ENCODE measurements at regions of chr17 and their contacts with region 1.

Region 1: DNA sequence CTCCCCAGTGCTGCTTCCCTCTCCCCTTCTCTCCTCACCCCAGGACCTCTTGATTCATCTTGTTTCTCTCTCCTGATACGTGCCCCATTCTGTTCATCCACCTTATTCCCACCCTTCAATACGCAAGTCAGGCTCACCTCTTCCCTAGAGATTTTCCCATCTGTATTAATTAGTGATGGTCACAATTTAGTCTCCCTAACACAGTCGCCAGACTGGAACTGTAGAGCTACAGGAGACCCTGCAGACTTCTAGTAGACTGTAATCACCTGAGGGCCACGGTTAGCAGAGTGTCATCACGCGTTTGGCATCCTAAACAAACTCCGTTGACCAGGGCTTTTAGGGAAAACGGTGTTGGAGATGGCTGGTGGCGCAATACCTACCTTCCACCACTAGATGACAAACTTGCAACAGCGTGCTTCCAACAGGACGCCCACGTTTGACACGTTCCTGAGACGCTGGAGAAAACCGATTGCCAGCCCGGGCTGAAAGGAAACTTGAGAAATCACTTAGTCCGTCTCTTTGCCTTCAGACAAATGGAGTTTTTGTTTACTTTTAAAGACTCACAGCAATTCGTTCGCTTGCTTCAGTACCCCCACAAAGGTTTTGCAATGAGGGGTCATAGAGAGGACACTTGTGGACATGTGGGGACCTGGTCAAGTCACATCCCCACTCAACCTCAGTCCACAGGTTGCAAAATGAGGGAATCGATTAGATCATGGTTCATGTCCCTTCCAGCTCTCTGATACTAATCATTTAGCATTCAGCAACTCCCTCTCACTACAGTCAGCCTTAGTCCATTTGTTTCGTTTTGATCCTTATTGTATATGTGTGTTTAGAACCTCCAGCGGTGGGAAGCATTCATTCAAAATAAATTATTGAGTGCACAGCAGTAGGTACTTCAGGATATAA is 20.6 kb downstream of the MYL4 start:
- DNase-seq: peak; percentile 99
- ATAC-seq: peak; percentile 84
- H3K4me3 ChIP-seq: peak overlapping the region; percentile 58
- H3K27ac ChIP-seq: no peak overlapping the region
- H3K4me1 ChIP-seq: peaks cover 28% of the 10 kb centered on the region
- H3K27me3 ChIP-seq: no peaks in the 10 kb centered on the region
- CTCF ChIP-seq: peak; percentile 100

Region 2: DNA sequence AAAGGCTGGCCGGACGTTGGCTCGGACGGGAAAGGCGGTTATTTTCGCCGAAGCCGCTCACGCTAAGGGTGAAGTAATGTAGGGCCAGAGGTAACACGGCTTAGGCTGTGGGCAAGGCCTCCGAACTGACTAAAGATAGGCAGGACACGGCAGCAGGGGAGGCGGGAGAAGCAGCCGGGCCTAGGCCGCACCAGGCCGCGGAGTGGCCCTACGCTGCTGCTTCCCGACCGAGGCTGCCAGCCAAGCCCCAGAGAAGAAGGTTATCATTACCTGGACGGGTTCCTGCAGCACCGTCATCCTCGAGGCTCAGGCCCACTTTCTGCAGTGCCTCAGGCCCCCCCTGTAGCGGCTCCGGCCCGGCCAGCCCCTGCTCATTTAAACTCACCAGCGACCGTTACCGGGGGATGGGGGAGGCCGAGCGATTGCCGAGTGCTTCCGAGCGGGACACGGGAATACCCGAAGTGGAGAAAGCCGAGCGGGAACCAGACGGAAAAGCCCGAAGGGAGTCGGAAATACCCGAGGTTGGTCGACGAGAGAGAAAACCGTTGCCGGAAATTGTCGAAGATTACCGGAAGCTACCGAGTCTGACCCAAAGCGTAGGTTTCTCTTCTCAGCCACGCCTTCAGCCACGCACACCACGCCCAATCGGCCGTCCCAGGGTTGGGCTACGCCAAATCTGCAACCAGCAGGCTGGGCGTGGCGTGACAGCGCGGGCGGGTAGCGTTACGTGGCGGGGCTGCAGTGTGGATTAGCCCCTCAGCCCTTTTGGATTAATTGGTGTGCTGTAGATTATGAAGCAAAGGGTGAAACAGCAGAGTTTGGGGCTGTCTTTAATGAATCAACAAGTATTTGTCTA is 40.7 kb before region 1 on chr17 and contains the start of gene CDC27:
- CTCF ChIA-PET with region 1: no interaction called
- POLR2A ChIA-PET with region 1: no interaction called
- intact Hi-C with region 1: loop called (anchors 2 kb)
- DNase-seq: peak; percentile 100
- ATAC-seq: peak; percentile 93
- H3K4me3 ChIP-seq: peak within 1 kb of the TSS; percentile 87
- H3K27ac ChIP-seq: peak within 1 kb of the TSS; percentile 78
- H3K4me1 ChIP-seq: peaks cover 20% of the 10 kb centered on the region
- H3K27me3 ChIP-seq: no peaks in the 10 kb centered on the region
- CTCF ChIP-seq: no peak
- total RNA-seq, gene CDC27: 149 and 167 TPM in 2 replicates

Region 3: DNA sequence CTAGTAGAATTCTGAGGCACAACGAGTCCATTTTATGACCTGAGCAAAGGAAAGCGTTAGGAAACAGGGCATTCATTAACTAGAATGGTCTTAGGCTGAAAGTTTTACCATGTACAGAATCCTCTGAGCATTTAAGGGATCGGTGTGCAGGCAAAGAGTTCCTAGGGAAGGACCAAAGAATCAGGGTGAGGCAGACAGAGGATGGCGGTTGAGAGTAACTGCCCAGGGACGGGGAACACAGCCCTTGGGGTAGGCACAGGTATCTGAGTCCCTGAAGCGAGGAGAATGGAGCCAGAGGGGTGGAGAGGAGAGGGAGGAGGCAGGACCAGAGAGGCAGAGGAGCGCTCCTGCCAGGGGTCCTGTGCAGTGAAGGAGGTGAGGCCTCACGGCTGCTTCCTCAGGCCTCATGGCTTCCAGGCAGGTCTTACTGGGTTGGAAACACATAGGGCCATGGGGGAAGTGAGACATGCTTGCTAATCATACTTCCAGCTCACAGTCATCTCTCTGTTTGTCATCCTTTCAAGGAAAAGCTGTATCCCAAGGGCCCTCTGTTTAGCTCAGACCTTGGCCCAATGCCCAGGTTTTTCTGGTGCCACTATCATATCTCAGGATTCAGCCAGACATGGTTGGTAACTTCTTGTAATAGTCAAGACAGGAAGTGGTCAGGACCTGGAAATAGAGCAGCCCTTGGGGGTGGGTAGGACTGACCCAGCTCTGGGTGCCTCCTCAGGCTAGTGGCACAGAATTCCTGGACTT is 10.0 kb after region 1 on chr17:
- CTCF ChIA-PET with region 1: interaction called, 10 read pairs
- POLR2A ChIA-PET with region 1: no interaction called
- intact Hi-C with region 1: loop called (anchors 1 kb)
- DNase-seq: peak; percentile 100
- ATAC-seq: peak; percentile 98
- H3K4me3 ChIP-seq: no peak overlapping the region
- H3K27ac ChIP-seq: peak overlapping the region; percentile 84
- H3K4me1 ChIP-seq: peaks cover 21% of the 10 kb centered on the region
- H3K27me3 ChIP-seq: no peaks in the 10 kb centered on the region
- CTCF ChIP-seq: no peak

Region 4: GRCh38 chr17:47621293-47622178 is 391.7 kb after region 1 on chr17:
- CTCF ChIA-PET with region 1: no interaction called
- POLR2A ChIA-PET with region 1: no interaction called
- intact Hi-C with region 1: loop called (anchors 10 kb)
- DNase-seq: peak; percentile 98
- ATAC-seq: peak; percentile 93
- H3K4me3 ChIP-seq: no peak overlapping the region; the same call in 1 of the 2 replicates
- H3K27ac ChIP-seq: peak overlapping the region; percentile 41
- H3K4me1 ChIP-seq: peaks cover 27% of the 10 kb centered on the region
- H3K27me3 ChIP-seq: no peaks in the 10 kb centered on the region
- CTCF ChIP-seq: peak; percentile 48

Measured in PC-3 (cell line).